Activated CD4-positive, alpha-beta T cell treated with anti-CD3 and anti-CD28 coated beads for 36 hours (primary cell): ENCODE measurements at regions of chr6 and their contacts with region 1.

Region 1: GRCh38 chr6:15327271-15327670 is 81.4 kb downstream of the JARID2 start:
- DNase-seq: peak; percentile 73
- ATAC-seq: peak; percentile 68
- H3K4me3 Mint-ChIP-seq: no peak overlapping the region
- H3K27ac Mint-ChIP-seq: peak overlapping the region; percentile 59
- H3K4me1 Mint-ChIP-seq: peaks cover 91% of the 10 kb centered on the region
- H3K27me3 Mint-ChIP-seq: no peaks in the 10 kb centered on the region

Region 2: DNA sequence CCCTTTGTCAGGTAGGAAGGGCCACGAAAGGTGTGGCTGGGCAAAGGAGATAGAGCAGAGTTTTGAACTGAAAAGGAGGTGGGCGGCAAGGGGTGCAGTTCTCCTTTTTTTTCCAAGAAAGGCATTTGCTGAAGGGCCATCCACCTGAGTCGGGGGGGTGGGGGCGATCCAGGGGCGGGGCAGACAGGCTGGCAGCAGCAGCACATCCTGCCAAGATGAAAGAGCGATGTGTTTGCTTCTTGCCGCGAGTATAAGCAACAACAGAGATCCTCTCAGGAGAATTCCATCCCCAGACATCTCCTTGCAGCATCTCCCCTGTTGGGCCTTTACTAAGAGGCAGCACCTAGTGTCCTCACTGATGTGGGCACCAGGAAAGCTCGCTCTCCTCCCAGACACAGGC is 693.2 kb before region 1 on chr6:
- CTCF ChIA-PET with region 1: no interaction called
- POLR2A ChIA-PET with region 1: no interaction called
- intact Hi-C with region 1: no loop called
- DNase-seq: peak; percentile 55
- ATAC-seq: no peak
- H3K4me3 Mint-ChIP-seq: peak overlapping the region; percentile 75
- H3K27ac Mint-ChIP-seq: peak overlapping the region; percentile 93
- H3K4me1 Mint-ChIP-seq: peaks cover 55% of the 10 kb centered on the region
- H3K27me3 Mint-ChIP-seq: no peaks in the 10 kb centered on the region

Region 3: DNA sequence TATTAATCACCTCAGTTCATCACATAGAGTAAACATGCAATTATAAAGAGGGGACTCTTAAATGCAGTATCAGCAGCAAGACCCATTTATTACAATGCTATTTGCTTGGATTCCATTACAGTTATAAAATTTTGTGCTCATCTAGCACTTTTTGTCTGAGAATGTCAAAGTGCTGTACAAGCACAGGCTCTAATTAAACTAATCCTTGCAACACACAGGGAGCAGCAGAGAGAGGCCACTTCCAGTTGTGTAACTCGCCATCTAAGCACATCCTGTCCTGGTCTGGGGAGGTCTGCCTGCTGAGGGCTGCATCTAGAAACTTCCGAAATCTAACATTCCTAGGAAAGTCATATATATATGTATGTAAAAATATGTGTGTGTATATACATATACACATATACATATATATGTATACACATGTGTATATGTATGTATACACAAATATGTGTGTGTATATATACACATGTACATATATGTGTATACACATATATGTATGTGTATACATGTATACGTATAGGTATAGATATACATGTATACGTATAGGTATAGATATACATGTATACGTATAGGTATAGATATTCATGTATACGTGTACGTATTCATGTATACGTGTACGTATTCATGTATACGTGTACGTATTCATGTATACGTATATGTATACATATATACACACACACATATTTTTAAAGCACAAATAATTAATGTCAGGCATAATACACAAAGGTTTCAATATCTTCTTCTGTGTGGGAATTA is 217.8 kb before region 1 on chr6:
- CTCF ChIA-PET with region 1: no interaction called
- POLR2A ChIA-PET with region 1: no interaction called
- intact Hi-C with region 1: no loop called
- DNase-seq: no peak
- ATAC-seq: no peak
- H3K4me3 Mint-ChIP-seq: no peak overlapping the region
- H3K27ac Mint-ChIP-seq: no peak overlapping the region
- H3K4me1 Mint-ChIP-seq: peaks cover 2% of the 10 kb centered on the region
- H3K27me3 Mint-ChIP-seq: no peaks in the 10 kb centered on the region

Region 4: DNA sequence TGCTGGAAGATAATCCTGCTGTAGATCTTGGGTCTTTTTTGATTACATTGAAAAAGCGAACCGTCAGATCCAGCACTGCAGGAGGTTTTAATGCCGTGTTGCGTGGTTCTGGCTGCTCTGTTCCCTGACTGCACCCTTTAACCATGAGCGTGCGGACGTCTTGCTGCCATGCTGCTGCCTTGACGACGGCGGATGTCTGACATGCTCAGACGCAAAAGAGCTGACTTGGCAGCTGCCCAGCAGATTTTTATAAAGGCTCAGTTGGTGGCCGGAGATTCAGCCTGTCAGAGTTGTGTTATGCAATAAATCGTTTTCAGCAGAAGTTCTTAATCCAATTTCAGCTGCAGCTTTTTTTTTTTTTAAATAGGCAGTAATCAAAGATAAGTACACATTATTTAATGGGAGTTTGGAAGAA is 38.0 kb after region 1 on chr6:
- CTCF ChIA-PET with region 1: interaction called, 4 read pairs
- POLR2A ChIA-PET with region 1: no interaction called
- intact Hi-C with region 1: loop called in 1 of 2 experiments (anchors 5 kb)
- DNase-seq: peak; percentile 71
- ATAC-seq: peak; percentile 66
- H3K4me3 Mint-ChIP-seq: peak overlapping the region; percentile 25
- H3K27ac Mint-ChIP-seq: peak overlapping the region; percentile 16
- H3K4me1 Mint-ChIP-seq: peaks cover 34% of the 10 kb centered on the region
- H3K27me3 Mint-ChIP-seq: no peaks in the 10 kb centered on the region

Region 5: DNA sequence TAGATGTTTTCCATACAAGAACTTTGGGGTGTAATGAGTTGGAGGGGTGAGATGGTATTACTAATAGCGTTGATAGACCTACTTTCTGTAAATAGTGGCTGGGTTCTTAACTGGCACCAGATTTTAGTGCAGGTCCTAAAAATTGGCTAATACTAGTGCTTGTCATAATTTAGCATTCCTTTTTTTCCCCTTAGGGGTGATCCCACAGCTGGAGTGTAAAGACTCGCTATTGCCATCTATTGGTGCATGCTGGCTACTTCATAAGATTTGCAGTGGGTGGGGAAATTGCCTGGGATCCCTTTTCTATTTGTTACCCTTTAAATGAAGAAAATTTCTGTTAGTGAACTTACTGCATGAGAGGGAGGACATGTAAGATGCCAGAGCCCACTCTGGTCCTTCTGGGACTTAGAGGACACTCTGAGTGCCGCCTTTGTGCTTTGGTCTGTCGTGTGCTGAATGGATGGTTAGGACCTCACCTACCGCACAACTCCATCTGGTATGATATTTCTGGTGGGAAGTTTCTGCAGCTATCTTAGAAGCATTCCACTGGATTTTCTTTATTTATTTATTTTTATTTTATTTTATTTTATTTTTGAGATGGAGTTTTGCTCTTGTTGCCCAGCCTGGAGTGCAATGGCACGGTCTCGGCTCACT is 114.1 kb after region 1 on chr6:
- CTCF ChIA-PET with region 1: interaction called, 3 read pairs
- POLR2A ChIA-PET with region 1: no interaction called
- intact Hi-C with region 1: loop called (anchors 1 to 5 kb)
- DNase-seq: peak; percentile 49
- ATAC-seq: no peak
- H3K4me3 Mint-ChIP-seq: no peak overlapping the region
- H3K27ac Mint-ChIP-seq: no peak overlapping the region
- H3K4me1 Mint-ChIP-seq: peaks cover 73% of the 10 kb centered on the region
- H3K27me3 Mint-ChIP-seq: no peaks in the 10 kb centered on the region